CD4-positive, alpha-beta memory T cell (primary cell): ENCODE measurements at regions of chr7 and their contacts with region 1.

Region 1: DNA sequence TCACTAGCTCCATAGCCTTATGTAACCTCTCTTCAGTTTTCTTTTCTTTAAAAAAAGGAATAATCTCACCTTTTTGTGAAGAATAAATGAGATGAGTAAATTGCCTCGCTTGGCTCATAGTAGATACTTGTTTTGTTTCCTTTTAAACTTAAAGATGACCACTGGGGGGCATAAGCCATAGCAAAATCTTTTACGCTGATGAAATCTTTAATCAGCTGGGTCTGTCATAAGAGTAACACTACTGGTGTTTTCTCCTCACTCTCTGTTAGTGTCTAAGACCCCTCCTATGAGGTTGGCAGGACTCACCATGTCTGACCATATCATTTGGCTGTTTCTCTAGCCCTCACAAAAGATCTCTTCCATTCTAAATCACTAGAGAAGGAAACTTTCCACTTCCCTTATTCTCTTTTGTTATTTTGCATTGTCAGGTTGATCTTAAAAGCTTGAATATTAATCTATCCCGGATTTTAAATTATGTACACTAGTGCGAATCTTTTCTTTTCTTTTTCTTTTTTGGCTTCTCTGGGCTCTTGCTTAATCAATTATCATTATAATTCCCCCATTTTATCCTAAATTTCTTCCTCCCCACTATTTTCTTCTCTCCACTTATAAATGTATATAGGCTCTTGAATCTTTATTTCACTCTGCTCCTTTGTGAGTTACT is 12.5 kb downstream of the STAG3 start:
- DNase-seq: peak in 4 of 5 donors; percentile 48 to 59 (median 57)
- H3K4me3 ChIP-seq: no peak overlapping the region
- H3K4me3 Mint-ChIP-seq: no peak overlapping the region
- H3K27ac ChIP-seq: no peak overlapping the region
- H3K27ac Mint-ChIP-seq: peak overlapping the region in 6 of 7 donors; percentile 0 to 69 (median 30)
- H3K4me1 ChIP-seq: no peaks in the 10 kb centered on the region
- H3K4me1 Mint-ChIP-seq: peaks cover 3 to 6% (median 5%) of the 10 kb centered on the region in 4 donors
- H3K27me3 ChIP-seq: no peaks in the 10 kb centered on the region
- H3K27me3 Mint-ChIP-seq: no peaks in the 10 kb centered on the region

Region 2: GRCh38 chr7:100215895-100216294 is 25.7 kb after region 1 on chr7:
- CTCF ChIA-PET with region 1: interaction called, 23 read pairs
- POLR2A ChIA-PET with region 1: interaction called, 7 read pairs
- intact Hi-C with region 1: loop called (anchors 1 kb)
- DNase-seq: no peak
- H3K4me3 ChIP-seq: no peak overlapping the region
- H3K4me3 Mint-ChIP-seq: no peak overlapping the region
- H3K27ac ChIP-seq: no peak overlapping the region
- H3K27ac Mint-ChIP-seq: peak overlapping the region in 6 of 7 donors; percentile 37 to 70 (median 57)
- H3K4me1 ChIP-seq: peaks cover 36% of the 10 kb centered on the region
- H3K4me1 Mint-ChIP-seq: peaks cover 30 to 64% (median 38%) of the 10 kb centered on the region in 4 donors
- H3K27me3 ChIP-seq: no peaks in the 10 kb centered on the region
- H3K27me3 Mint-ChIP-seq: no peaks in the 10 kb centered on the region

Region 3: DNA sequence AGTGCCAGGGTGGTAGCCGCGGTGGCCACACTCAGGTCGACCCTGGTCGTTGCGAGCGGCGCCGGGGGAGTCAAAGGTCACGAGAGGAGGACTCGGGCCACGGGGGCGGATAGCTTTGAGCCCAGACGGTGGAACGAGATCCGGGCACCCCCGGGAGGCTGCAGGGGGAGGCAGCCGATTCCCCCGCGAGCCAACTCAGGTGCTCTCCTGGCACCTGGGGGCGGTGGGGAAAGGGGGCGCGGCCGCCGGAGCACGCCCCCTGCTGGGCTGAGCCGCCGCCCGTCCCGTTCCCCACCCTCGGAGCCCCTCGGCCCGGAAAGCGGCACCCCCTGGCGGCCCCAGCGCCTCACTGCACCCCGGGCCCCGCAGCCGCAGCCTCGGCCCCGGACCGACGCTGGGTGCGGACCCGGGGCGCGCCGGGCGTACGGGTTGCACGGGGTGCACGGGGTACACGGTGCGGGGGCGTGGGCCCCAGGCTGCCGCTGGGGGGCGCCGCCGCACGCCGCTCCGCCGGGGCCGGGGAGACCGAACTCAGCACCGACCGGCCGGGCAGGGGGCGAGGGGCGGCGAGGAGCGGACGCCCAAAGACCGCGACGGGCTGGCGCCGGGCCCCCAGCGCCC is 293.0 kb after region 1 on chr7:
- CTCF ChIA-PET with region 1: no interaction called
- POLR2A ChIA-PET with region 1: no interaction called
- intact Hi-C with region 1: no loop called
- DNase-seq: peak; percentile 75 to 85 (median 79)
- H3K4me3 ChIP-seq: peak overlapping the region in 1 of 2 donors; percentile 64
- H3K4me3 Mint-ChIP-seq: peak overlapping the region; percentile 83 to 90 (median 86)
- H3K27ac ChIP-seq: peak overlapping the region; percentile 45
- H3K27ac Mint-ChIP-seq: peak overlapping the region in 5 of 7 donors; percentile 29 to 85 (median 53)
- H3K4me1 ChIP-seq: peaks cover 32% of the 10 kb centered on the region
- H3K4me1 Mint-ChIP-seq: peaks cover 16 to 34% (median 21%) of the 10 kb centered on the region in 4 donors
- H3K27me3 ChIP-seq: no peaks in the 10 kb centered on the region
- H3K27me3 Mint-ChIP-seq: no peaks in the 10 kb centered on the region